H1 (cell line): ENCODE measurements at regions of chr21 and their contacts with region 1.

Region 1: GRCh38 chr21:17387030-17387617 is 125.7 kb upstream of the CXADR start:
- DNase-seq: no peak
- H3K4me3 ChIP-seq: peak overlapping the region in 1 of 4 experiments; percentile 5; a peak in 1 of 8 replicates
- H3K27ac ChIP-seq: no peak overlapping the region
- H3K4me1 ChIP-seq: peaks cover 0 to 4% (median 1%) of the 10 kb centered on the region in 4 experiments; a peak in 2 of 7 replicates
- H3K27me3 ChIP-seq: no peaks in the 10 kb centered on the region
- CTCF ChIP-seq: peak in 2 of 3 experiments; percentile 54 to 62; a peak in 3 of 4 replicates
- EP300 ChIP-seq: no peak
- POLR2A ChIP-seq: no peak
- RAD21 ChIP-seq: peak; percentile 83 to 86

Region 2: DNA sequence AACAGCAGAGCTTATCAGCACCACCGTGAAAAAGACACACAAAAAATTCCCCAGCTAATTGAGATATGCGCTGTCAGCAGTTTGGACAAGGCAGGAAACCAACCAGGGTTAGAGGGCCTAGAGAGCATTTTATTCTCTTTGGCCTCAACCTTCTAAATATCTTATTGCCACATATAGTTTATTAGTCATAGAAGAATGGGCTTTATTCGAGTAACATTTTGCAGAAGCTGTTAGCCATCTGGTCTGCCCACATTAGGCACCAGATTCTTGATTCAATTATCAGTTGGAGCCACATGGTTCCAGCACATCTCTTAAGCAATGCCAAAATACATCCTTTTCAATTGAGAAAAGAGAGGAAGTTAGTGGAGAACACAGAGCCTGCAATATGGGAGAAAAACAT is 15.8 kb after region 1 on chr21:
- CTCF ChIA-PET with region 1: interaction called, 12 read pairs
- POLR2A ChIA-PET with region 1: interaction called, 3 read pairs
- DNase-seq: no peak
- H3K4me3 ChIP-seq: no peak overlapping the region
- H3K27ac ChIP-seq: no peak overlapping the region
- H3K4me1 ChIP-seq: no peaks in the 10 kb centered on the region
- H3K27me3 ChIP-seq: no peaks in the 10 kb centered on the region
- CTCF ChIP-seq: no peak
- EP300 ChIP-seq: no peak
- POLR2A ChIP-seq: no peak
- RAD21 ChIP-seq: no peak

Region 3: DNA sequence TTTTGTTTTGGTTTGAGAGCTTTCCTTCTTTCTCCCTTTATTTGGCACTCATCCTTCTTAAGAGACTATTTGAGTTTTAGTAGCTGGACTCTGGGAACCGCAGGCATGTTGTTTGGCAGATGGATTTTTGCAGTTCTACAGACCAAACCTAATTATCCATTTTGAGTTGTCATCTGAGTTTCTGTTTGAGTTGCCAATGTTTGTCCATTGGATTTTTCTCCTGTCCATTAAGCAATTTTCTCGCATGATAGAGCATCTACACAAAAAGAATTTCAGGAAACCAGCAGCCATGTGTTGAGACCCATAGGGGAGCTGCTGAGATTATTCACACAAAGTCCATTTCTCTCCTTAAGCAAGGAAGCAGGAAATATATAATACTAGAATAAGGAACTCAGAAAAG is 108.6 kb after region 1 on chr21:
- CTCF ChIA-PET with region 1: no interaction called
- POLR2A ChIA-PET with region 1: no interaction called
- DNase-seq: no peak
- H3K4me3 ChIP-seq: no peak overlapping the region
- H3K27ac ChIP-seq: no peak overlapping the region
- H3K4me1 ChIP-seq: no peaks in the 10 kb centered on the region
- H3K27me3 ChIP-seq: no peaks in the 10 kb centered on the region
- CTCF ChIP-seq: no peak
- EP300 ChIP-seq: no peak
- POLR2A ChIP-seq: no peak
- RAD21 ChIP-seq: no peak

Region 4: DNA sequence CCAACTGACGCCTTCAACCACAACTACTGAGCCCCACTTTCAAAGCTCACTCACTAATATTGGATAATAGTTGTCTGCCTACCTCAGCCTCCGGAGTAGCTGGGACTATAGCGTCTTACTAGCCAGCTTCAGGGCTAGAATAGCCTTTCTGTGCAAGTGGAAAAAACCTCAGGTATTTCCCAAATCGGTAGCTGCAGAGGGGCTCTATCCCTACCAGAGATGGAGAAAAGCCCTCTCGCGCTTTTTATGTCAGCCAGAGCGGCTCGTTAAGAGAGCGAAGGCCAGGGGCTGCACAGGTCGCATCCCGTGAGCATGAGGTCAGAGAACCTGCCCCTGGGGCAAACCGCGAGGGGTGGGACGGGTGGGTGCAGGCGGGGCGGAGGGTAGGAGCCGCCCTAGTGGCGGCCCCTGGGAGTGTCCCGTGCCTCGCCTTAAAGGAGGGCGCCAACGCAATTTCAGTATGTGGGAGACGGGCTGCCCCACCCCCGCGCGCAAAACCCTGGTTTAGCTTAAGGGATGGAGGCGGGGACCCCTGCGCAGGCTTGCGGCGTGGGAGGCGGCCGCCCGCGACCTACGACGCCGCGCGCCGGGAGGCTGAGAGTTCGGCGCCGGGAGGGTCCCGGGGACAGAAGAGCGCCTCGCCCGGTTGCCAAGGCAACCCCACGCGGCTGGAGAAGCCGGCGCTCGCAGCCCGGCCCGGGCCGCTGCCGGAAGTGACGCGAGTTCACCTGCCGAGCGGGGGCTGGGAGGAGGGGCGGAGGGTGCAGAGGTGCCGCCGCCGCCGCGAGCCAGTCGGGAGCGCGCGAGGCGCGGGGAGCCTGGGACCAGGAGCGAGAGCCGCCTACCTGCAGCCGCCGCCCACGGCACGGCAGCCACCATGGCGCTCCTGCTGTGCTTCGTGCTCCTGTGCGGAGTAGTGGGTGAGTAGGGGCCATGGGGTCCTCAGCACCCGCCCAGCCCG is 125.4 kb after region 1 on chr21 and contains the start of gene CXADR:
- CTCF ChIA-PET with region 1: interaction called, 13 read pairs
- POLR2A ChIA-PET with region 1: interaction called, 11 read pairs
- DNase-seq: peak; percentile 59 to 94
- H3K4me3 ChIP-seq: peak within 1 kb of the TSS; percentile 85 to 100 (median 96)
- H3K27ac ChIP-seq: peak within 1 kb of the TSS; percentile 95
- H3K4me1 ChIP-seq: peaks cover 2 to 13% (median 11%) of the 10 kb centered on the region in 4 experiments
- H3K27me3 ChIP-seq: no peaks in the 10 kb centered on the region
- CTCF ChIP-seq: peak; percentile 51 to 71 (median 57)
- EP300 ChIP-seq: peak; percentile 41 to 62; a peak in 2 of 3 replicates
- POLR2A ChIP-seq: peak; percentile 81 to 93
- RAD21 ChIP-seq: peak; percentile 36 to 40; a peak in 3 of 4 replicates
- total RNA-seq, gene CXADR: 142 and 145 TPM in 2 replicates

Region 5: DNA sequence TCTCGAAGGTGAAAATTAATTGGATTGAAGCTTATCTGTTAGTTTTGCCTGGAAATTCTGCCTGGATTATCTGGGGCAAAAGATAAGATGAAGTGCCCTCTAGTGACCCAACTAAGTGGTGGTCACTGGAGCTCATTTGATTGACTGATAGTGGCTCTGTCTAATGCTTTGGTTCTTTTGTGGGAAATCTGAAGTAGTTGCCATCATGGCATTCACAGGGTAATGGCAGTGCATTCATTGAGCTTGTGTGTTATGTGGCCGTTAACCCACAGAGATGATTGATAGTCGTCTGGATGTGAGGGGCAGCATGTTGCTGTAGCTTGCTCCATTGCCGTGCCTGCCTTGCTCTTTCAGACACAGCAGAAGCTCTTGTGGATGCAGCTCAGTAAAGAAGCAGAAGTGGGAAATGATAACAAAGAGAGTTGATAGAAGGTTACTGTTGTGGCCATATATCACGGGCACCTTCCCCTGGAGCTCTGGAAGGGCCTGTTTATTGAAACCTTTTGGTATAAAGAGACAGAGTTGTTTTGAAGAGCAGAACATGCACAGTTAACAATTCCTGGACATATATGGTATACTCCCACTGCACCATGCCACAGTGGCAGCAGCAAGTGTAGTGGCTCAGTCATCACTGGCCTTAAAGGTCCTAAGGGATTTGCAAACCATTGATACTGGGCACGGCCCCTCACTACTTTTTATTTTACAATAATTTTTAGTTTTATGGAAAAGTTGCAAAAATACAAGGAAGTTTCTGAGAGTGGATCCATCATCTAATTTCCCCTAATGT is 167.7 kb after region 1 on chr21:
- CTCF ChIA-PET with region 1: interaction called, 34 read pairs
- POLR2A ChIA-PET with region 1: no interaction called
- DNase-seq: no peak
- H3K4me3 ChIP-seq: no peak overlapping the region
- H3K27ac ChIP-seq: no peak overlapping the region
- H3K4me1 ChIP-seq: no peaks in the 10 kb centered on the region; a peak in 1 of 7 replicates
- H3K27me3 ChIP-seq: no peaks in the 10 kb centered on the region
- CTCF ChIP-seq: peak in 2 of 3 experiments; percentile 31 to 56; a peak in 2 of 4 replicates
- EP300 ChIP-seq: no peak
- POLR2A ChIP-seq: no peak
- RAD21 ChIP-seq: peak; percentile 57 to 66

Region 6: GRCh38 chr21:17585875-17586450 is 198.8 kb after region 1 on chr21:
- CTCF ChIA-PET with region 1: interaction called, 30 read pairs
- POLR2A ChIA-PET with region 1: interaction called, 5 read pairs
- DNase-seq: no peak
- H3K4me3 ChIP-seq: no peak overlapping the region
- H3K27ac ChIP-seq: no peak overlapping the region
- H3K4me1 ChIP-seq: no peaks in the 10 kb centered on the region
- H3K27me3 ChIP-seq: no peaks in the 10 kb centered on the region
- CTCF ChIP-seq: peak in 1 of 3 experiments; percentile 42; a peak in 2 of 4 replicates
- EP300 ChIP-seq: no peak
- POLR2A ChIP-seq: no peak
- RAD21 ChIP-seq: peak; percentile 44 to 49; a peak in 3 of 4 replicates